HEK293T (cell line): ENCODE measurements at regions of chr17 and their contacts with region 1.

Region 1: GRCh38 chr17:30906101-30906911 is at the start of gene TEFM:
- DNase-seq: peak; percentile 81

Region 2: DNA sequence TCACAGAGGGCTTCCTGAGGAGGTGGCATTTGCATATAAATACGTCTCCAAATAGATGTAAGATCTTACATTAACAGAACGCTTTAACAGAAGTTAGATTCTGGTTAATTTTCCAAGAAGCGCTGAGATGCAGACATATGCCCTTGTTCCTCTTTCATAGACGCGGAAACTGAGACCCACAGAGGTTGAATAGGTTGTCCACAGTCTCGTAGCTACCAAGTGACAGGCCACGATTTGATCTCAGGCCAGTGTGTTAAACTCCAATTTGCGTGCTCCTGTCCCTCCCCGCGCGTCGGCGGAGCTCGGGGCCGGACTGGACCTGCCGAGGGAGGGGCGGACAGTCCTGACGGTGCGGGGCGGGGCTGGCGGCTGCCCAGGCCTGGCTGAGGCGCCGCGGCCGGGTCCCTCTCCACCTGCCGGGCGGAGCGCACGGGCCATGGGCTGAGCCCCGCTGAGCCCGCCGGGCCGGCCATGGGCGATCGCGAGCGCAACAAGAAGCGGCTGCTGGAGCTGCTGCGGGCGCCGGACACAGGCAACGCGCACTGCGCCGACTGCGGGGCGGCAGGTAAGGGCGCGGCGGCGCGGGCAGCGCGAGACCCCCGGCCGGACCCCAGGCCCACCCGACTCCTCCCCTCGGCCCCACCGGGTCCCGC is 15.4 kb after region 1 on chr17 and contains the start of gene ADAP2:
- CTCF ChIA-PET with region 1: no interaction called
- POLR2A ChIA-PET with region 1: interaction called, 15 read pairs
- DNase-seq: peak; percentile 46

Region 3: DNA sequence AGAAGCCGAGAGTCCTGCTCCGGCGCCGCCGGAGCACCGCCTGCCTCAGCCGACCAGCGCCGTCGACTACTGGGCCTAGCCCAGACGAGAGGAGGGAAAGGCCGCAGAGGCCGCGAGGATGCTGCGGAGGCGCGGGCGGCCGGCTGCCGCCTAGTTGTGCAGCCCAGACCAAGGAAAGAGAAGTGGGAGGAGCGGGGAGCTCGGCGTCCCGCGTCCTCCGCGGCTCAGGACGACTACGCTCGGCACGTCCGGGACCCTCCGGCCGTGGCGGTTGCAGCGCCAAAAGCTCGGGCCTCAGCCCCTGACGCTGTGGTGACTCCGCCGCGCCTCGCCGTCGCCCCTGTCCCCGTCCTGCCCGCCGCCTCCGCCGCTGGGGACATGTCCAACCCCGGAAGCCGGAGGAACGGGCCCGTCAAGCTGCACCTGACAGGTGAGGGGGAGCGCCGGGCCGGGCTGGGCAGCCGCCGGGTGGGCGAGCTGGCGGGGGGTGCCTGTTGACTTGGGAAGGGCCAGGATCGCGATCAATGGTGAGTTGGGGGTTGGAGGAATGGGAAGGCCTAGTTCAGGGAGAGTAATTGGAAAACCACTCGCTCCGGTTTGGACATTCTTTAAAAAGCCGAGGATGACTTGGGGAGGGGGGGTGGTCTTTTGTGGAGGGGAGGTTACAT is 102.2 kb after region 1 on chr17:
- CTCF ChIA-PET with region 1: no interaction called
- POLR2A ChIA-PET with region 1: interaction called, 17 read pairs
- DNase-seq: peak; percentile 41